Naive thymus-derived CD4-positive, alpha-beta T cell (primary cell): ENCODE measurements at regions of chr3 and their contacts with region 1.

Region 1: DNA sequence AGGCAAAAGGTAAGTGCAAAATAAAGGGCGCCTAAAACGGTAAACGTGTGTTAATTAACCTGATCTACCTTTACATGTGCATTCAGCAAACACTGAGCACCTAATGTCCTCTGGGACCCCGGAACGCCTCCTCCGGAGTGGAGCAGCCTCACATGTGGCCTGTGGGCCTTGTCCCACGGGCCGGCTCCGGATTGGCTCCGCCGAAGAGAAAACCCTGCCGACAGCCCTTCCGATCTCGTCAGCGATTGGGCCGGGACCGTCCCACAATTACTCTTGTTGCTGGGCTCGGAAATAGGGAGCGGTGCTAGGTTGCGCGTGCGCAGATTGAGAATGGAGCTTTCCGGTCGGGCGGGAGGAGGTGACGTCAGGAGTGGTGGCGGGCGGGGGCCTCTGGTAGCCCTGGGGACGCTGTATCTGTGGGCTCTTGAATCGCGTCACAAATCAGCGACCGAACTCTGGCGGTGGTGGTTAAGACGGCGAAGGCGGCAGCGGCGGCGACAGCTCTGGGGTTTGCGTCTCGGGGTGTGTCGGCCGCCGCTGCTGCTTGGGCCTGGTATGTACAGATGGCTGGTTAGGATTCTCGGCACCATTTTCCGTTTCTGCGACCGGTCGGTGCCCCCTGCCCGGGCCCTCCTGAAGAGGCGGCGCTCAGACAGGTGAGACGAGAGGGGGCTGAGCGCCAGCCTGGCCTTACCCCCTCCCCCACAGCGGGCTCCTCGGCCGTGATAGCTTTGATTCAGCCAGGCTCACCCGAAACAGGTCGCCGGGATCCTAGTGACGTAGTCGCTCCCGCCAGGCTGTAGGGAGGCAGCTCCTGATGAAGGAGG is at the start of gene SENP2:
- DNase-seq: peak; percentile 96 to 100 (median 100)
- ATAC-seq: peak; percentile 94
- H3K4me3 ChIP-seq: peak within 1 kb of the TSS; percentile 95
- H3K4me3 Mint-ChIP-seq: peak within 1 kb of the TSS; percentile 79 to 94 (median 87)
- H3K27ac ChIP-seq: peak within 1 kb of the TSS; percentile 95
- H3K27ac Mint-ChIP-seq: peak within 1 kb of the TSS; percentile 86 to 99 (median 95)
- H3K4me1 ChIP-seq: peaks cover 21 to 27% of the 10 kb centered on the region in 2 donors
- H3K4me1 Mint-ChIP-seq: peaks cover 24 to 40% (median 31%) of the 10 kb centered on the region in 7 donors
- H3K27me3 ChIP-seq: no peaks in the 10 kb centered on the region
- H3K27me3 Mint-ChIP-seq: peaks cover 0 to 5% (median 0%) of the 10 kb centered on the region in 5 donors
- total RNA-seq, gene SENP2: 30.0 to 59.2 (median 47.3) TPM

Region 2: DNA sequence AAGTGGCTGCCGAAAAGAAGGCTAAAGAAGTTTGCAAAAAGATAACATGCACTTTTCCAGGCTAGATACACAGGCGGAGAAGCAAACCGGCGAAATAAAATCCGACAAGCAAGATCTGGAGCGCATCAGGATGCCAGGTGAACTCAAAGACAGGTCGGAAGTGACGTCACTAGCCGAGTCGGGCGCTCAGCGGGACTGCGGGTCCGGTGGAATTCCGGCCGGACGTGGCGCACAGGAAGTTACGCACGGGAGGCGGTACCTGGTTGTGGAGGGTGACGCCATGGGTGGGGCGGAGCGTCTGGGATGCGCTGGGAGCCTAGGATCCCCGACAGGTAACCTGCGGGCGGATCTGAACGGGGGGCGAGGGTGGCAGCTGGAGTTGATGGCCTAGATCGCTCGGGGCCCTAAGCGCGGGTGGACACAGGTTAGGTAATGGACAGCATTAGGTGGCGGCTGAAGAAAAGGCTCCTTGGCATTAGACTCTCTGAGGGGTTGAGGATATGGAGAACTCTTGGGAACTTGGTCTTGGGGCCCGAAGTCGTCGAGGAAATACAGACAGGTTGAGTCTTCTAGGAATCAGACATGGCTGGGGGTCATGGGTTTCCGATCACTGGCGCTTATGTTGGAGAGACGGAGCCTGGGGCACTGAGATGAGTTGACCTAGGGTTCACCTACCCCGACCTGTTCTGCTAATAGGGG is 303.2 kb before region 1 on chr3:
- CTCF ChIA-PET with region 1: no interaction called
- POLR2A ChIA-PET with region 1: no interaction called
- intact Hi-C with region 1: loop called (anchors 1 kb)
- DNase-seq: peak; percentile 80 to 95 (median 89)
- ATAC-seq: peak; percentile 99
- H3K4me3 ChIP-seq: peak overlapping the region; percentile 91
- H3K4me3 Mint-ChIP-seq: peak overlapping the region; percentile 89 to 100 (median 94)
- H3K27ac ChIP-seq: peak overlapping the region; percentile 59
- H3K27ac Mint-ChIP-seq: peak overlapping the region; percentile 77 to 98 (median 93)
- H3K4me1 ChIP-seq: peaks cover 5 to 12% of the 10 kb centered on the region in 2 donors
- H3K4me1 Mint-ChIP-seq: peaks cover 15 to 33% (median 19%) of the 10 kb centered on the region in 7 donors
- H3K27me3 ChIP-seq: no peaks in the 10 kb centered on the region
- H3K27me3 Mint-ChIP-seq: peaks cover 9 to 25% (median 21%) of the 10 kb centered on the region in 5 donors

Region 3: GRCh38 chr3:185423178-185423577 is 162.9 kb before region 1 on chr3:
- CTCF ChIA-PET with region 1: no interaction called
- POLR2A ChIA-PET with region 1: no interaction called
- intact Hi-C with region 1: no loop called
- DNase-seq: no peak
- ATAC-seq: no peak
- H3K4me3 ChIP-seq: no peak overlapping the region
- H3K4me3 Mint-ChIP-seq: no peak overlapping the region
- H3K27ac ChIP-seq: no peak overlapping the region
- H3K27ac Mint-ChIP-seq: no peak overlapping the region
- H3K4me1 ChIP-seq: no peaks in the 10 kb centered on the region
- H3K4me1 Mint-ChIP-seq: peaks cover 0 to 7% (median 0%) of the 10 kb centered on the region in 7 donors
- H3K27me3 ChIP-seq: no peaks in the 10 kb centered on the region
- H3K27me3 Mint-ChIP-seq: peaks cover 0 to 18% (median 15%) of the 10 kb centered on the region in 5 donors

Region 4: DNA sequence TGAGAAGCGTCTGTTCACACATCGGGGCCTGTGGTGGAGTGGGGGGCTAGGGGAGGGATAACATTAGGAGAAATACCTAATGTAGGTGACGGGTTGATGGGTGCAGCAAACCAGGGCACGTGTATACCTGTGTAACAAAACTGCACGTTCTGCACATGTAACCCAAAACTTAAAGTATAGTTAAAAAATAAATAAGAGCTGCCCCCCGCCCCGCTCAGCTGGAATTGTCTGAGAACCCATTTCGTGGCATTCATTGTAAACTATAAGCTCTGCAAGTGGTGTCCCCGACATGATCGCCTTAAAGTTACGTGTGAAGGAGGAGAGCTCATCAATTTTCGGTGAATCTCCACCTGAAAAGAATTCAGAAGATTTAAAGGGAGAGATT is 26.4 kb before region 1 on chr3:
- CTCF ChIA-PET with region 1: interaction called, 3 read pairs
- POLR2A ChIA-PET with region 1: no interaction called
- intact Hi-C with region 1: loop called (anchors 1 kb)
- DNase-seq: no peak
- ATAC-seq: no peak
- H3K4me3 ChIP-seq: no peak overlapping the region
- H3K4me3 Mint-ChIP-seq: peak overlapping the region in 6 of 10 donors; percentile 44 to 86 (median 76)
- H3K27ac ChIP-seq: no peak overlapping the region
- H3K27ac Mint-ChIP-seq: peak overlapping the region in 1 of 9 donors; percentile 85
- H3K4me1 ChIP-seq: peaks cover 0 to 12% of the 10 kb centered on the region in 2 donors
- H3K4me1 Mint-ChIP-seq: peaks cover 7 to 33% (median 18%) of the 10 kb centered on the region in 7 donors
- H3K27me3 ChIP-seq: no peaks in the 10 kb centered on the region
- H3K27me3 Mint-ChIP-seq: peaks cover 0 to 5% (median 2%) of the 10 kb centered on the region in 5 donors

Region 5: DNA sequence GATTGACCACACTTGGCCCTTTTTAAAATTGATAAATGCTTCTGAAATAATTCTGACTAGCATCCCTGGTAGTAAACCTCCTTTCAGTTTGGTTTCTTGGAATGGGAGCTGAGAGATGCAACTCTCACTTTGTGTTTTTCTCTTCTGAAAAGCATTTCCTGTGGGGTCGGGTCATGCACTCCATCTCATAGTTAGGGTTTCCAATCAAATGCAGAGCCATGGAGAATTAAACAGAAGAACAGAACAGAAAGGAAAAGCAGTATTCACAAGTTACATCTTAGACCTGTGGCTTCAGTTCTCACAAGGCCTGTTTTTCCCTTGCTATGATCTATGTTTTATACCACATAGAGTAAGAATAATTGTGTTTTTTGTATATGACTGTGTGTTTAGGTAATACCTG is 39.7 kb after region 1 on chr3:
- CTCF ChIA-PET with region 1: no interaction called
- POLR2A ChIA-PET with region 1: no interaction called
- intact Hi-C with region 1: loop called in 1 of 2 experiments (anchors 2 kb)
- DNase-seq: no peak
- ATAC-seq: no peak
- H3K4me3 ChIP-seq: no peak overlapping the region
- H3K4me3 Mint-ChIP-seq: peak overlapping the region in 1 of 10 donors; percentile 70
- H3K27ac ChIP-seq: no peak overlapping the region
- H3K27ac Mint-ChIP-seq: peak overlapping the region in 1 of 9 donors; percentile 87
- H3K4me1 ChIP-seq: no peaks in the 10 kb centered on the region
- H3K4me1 Mint-ChIP-seq: peaks cover 0 to 8% (median 0%) of the 10 kb centered on the region in 7 donors
- H3K27me3 ChIP-seq: no peaks in the 10 kb centered on the region
- H3K27me3 Mint-ChIP-seq: no peaks in the 10 kb centered on the region

Region 6: DNA sequence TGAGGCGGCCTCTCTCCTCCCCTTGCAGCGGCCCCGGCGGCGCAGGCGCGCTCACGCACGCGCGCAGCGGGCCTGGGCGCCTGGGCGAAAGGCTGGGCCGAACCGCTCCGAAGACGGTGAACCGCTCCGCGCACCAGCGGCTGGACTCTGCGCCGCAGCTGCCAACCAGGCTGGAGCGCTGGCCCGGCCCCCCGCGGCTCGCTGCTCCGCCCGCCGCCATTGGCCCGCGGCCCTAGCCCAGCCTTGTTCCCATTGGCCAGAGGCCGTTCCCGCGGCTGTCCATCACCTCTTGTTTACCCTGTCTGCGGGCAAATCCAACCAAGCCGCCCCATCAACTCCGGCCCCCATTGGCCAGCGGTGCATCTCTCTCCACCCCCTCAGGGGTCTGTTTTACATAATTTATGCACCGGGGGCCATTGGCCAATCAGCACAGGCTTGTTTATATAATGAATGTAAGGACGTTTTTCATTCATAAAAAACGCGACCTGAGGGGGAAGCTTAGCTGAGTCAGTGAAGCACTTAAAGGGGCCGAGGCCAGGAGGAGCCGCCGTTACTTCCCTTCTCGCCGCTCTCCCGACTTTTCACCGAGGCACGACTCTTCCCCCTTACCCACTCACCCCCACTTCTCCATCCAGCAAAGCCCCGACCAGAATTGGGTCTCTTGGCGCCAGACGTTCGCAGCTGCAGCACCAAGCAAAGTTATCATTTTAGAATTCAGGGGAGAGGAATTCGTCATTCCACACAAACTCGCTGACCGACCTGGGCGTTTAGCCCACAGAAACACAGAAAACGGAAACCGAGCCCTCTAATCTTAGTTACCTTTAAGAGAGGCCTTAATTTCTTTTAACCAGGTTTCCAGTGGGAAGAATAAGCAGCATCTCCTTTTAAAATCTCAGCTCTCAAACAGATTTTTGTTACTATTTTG is 523.1 kb after region 1 on chr3 and contains the start of gene ETV5:
- CTCF ChIA-PET with region 1: no interaction called
- POLR2A ChIA-PET with region 1: no interaction called
- intact Hi-C with region 1: loop called (anchors 5 kb)
- DNase-seq: peak; percentile 65 to 91 (median 79)
- ATAC-seq: peak; percentile 97
- H3K4me3 ChIP-seq: peak within 1 kb of the TSS; percentile 71
- H3K4me3 Mint-ChIP-seq: peak within 1 kb of the TSS; percentile 86 to 97 (median 90)
- H3K27ac ChIP-seq: no peak within 1 kb of the TSS
- H3K27ac Mint-ChIP-seq: peak within 1 kb of the TSS in 5 of 9 donors; percentile 7 to 90 (median 60)
- H3K4me1 ChIP-seq: peaks cover 23 to 35% of the 10 kb centered on the region in 2 donors
- H3K4me1 Mint-ChIP-seq: peaks cover 34 to 38% (median 38%) of the 10 kb centered on the region in 7 donors
- H3K27me3 ChIP-seq: peaks cover 22 to 54% of the 10 kb centered on the region in 2 donors
- H3K27me3 Mint-ChIP-seq: peaks cover 84 to 87% (median 86%) of the 10 kb centered on the region in 5 donors
- total RNA-seq, gene ETV5: 0.56 to 2.3 (median 0.97) TPM in 4 of 5 experiments, not detected in the other

Region 7: DNA sequence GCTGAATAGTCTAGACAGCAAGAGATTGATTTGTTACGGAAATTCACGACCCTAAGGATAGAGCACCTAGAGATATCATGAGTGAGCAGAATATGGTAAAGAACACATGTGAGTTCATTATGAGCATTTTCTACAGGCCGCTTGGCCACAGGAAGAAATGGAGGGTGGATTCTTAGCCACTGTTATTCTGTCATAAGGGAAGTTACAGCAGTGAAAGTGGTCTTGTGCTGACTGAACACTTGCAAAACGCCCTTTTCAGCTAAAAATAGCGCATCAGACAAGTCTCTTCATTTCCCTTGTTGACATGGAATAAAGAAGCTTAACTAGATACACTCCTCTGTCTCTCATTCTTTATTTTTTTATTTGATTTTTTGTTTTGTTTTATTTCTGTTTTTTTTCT is 756.1 kb after region 1 on chr3:
- CTCF ChIA-PET with region 1: no interaction called
- POLR2A ChIA-PET with region 1: no interaction called
- intact Hi-C with region 1: no loop called
- DNase-seq: no peak
- ATAC-seq: peak; percentile 67
- H3K4me3 ChIP-seq: no peak overlapping the region
- H3K4me3 Mint-ChIP-seq: no peak overlapping the region
- H3K27ac ChIP-seq: no peak overlapping the region
- H3K27ac Mint-ChIP-seq: no peak overlapping the region
- H3K4me1 ChIP-seq: no peaks in the 10 kb centered on the region
- H3K4me1 Mint-ChIP-seq: peaks cover 0 to 13% (median 11%) of the 10 kb centered on the region in 7 donors
- H3K27me3 ChIP-seq: no peaks in the 10 kb centered on the region
- H3K27me3 Mint-ChIP-seq: peaks cover 0 to 15% (median 7%) of the 10 kb centered on the region in 5 donors